HEK293T (cell line): ENCODE measurements at regions of chr11 and their contacts with region 1.

Region 1: GRCh38 chr11:45102810-45103621 is 43.4 kb upstream of the PRDM11 start:
- DNase-seq: peak; percentile 73

Region 2: GRCh38 chr11:44927174-44927661 is 175.8 kb before region 1 on chr11:
- CTCF ChIA-PET with region 1: interaction called, 78 read pairs
- POLR2A ChIA-PET with region 1: no interaction called
- DNase-seq: peak; percentile 79

Region 3: DNA sequence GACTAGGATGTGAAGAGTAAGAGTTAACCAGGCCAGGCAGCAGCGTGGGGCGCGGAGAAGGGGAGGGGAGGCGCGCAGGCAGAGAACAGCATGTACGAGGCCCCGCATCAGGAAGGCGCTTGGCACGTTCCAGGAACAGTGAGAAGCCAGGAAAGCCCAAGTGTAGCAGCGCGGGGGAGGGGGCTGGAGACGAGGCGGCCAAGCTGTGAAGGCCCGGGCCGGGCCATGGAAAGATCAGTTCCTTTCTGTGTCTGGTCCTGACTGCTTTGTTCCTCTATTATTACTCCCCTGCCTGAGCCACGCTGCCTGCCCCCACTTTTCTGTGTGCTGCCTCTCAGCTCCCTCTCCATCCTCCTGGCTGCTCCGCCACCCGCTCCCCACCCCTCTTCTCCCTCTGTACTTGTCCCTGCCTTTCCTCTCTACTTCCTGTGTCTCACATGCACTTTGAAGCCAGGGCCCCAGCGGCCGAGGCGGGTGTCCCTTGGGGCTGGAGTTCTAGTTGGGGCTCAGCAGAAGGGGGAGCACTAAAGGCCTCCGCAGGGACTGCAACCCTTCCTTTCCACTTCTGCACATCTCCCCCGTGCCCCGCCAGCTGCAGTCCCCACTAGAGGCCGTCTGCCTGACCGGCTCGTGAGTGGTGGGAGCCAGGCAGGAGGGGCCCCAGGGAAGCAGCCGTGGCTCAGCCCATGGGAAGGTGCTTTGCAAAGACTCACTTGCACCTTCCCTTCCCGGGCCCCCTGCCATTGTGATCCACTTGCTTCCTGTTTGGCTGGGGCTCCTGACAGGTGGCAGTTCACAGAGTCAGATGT is 107.1 kb after region 1 on chr11:
- CTCF ChIA-PET with region 1: no interaction called
- POLR2A ChIA-PET with region 1: no interaction called
- DNase-seq: no peak